ENCODE measurements at regions of chr11 and their contacts with region 1.

Region 1: GRCh38 chr11:18071098-18071705 is 25.1 kb upstream of the TPH1 start:
- DNase-seq: no peak
- ATAC-seq: no peak
- H3K4me3 ChIP-seq: no peak overlapping the region
- H3K27ac ChIP-seq: no peak overlapping the region
- H3K4me1 ChIP-seq: no peaks in the 10 kb centered on the region
- H3K27me3 ChIP-seq: no peaks in the 10 kb centered on the region
- CTCF ChIP-seq: no peak

Region 2: GRCh38 chr11:17132654-17133053 is 938.5 kb before region 1 on chr11:
- intact Hi-C with region 1: loop called in 1 of 10 experiments (anchors 10 kb)
- DNase-seq: no peak
- ATAC-seq: no peak
- H3K4me3 ChIP-seq: no peak overlapping the region
- H3K27ac ChIP-seq: no peak overlapping the region
- H3K4me1 ChIP-seq: no peaks in the 10 kb centered on the region
- H3K27me3 ChIP-seq: no peaks in the 10 kb centered on the region
- CTCF ChIP-seq: no peak

Region 3: GRCh38 chr11:18105802-18106574 is 34.8 kb after region 1 on chr11 and contains the start of gene SAAL1:
- intact Hi-C with region 1: no loop called
- DNase-seq: peak; percentile 85 to 90
- ATAC-seq: peak; percentile 97 to 99 (median 98)
- H3K4me3 ChIP-seq: peak within 1 kb of the TSS; percentile 79 to 99 (median 93)
- H3K27ac ChIP-seq: peak within 1 kb of the TSS in 9 of 10 donors; percentile 37 to 88 (median 76)
- H3K4me1 ChIP-seq: peaks cover 0 to 20% (median 14%) of the 10 kb centered on the region in 9 donors
- H3K27me3 ChIP-seq: peaks cover 0 to 13% (median 4%) of the 10 kb centered on the region in 7 donors
- CTCF ChIP-seq: peak; percentile 35 to 93 (median 72)
- total RNA-seq, gene SAAL1: 4.9 to 11.8 (median 7.1) TPM